Naive thymus-derived CD4-positive, alpha-beta T cell (primary cell): ENCODE measurements at regions of chr1 and their contacts with region 1.

Region 1: GRCh38 chr1:214584805-214585766 is 17.9 kb upstream of the CENPF start:
- DNase-seq: peak in 3 of 9 donors; percentile 9 to 12 (median 10)
- ATAC-seq: peak; percentile 45
- H3K4me3 ChIP-seq: no peak overlapping the region
- H3K4me3 Mint-ChIP-seq: no peak overlapping the region
- H3K27ac ChIP-seq: no peak overlapping the region
- H3K27ac Mint-ChIP-seq: no peak overlapping the region
- H3K4me1 ChIP-seq: no peaks in the 10 kb centered on the region
- H3K4me1 Mint-ChIP-seq: peaks cover 0 to 4% (median 0%) of the 10 kb centered on the region in 7 donors
- H3K27me3 ChIP-seq: no peaks in the 10 kb centered on the region
- H3K27me3 Mint-ChIP-seq: peaks cover 0 to 12% (median 4%) of the 10 kb centered on the region in 5 donors

Region 2: DNA sequence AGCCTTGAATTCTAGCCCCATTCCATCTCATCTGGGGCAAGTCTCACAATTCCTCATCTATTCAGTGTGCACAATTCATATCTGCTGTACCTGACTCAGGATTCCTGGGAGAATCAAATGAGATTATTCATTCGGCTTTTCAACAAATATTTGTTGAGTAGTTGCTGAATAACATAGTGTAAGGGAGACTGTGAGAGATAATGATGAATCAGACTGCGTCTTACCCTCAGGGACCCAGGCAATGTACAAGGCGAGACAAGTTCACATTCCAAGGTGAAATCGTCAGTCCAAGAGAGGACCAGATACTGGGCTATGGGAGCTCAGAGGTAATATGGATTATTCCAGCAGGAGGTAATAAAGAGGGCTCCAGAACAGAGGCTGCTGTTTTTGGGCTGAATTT is 371.9 kb before region 1 on chr1:
- CTCF ChIA-PET with region 1: no interaction called
- POLR2A ChIA-PET with region 1: no interaction called
- intact Hi-C with region 1: loop called in 1 of 2 experiments (anchors 5 kb)
- DNase-seq: no peak
- ATAC-seq: no peak
- H3K4me3 ChIP-seq: no peak overlapping the region
- H3K4me3 Mint-ChIP-seq: no peak overlapping the region
- H3K27ac ChIP-seq: no peak overlapping the region
- H3K27ac Mint-ChIP-seq: no peak overlapping the region
- H3K4me1 ChIP-seq: no peaks in the 10 kb centered on the region
- H3K4me1 Mint-ChIP-seq: peaks cover 0 to 10% (median 5%) of the 10 kb centered on the region in 7 donors
- H3K27me3 ChIP-seq: no peaks in the 10 kb centered on the region
- H3K27me3 Mint-ChIP-seq: peaks cover 7 to 38% (median 13%) of the 10 kb centered on the region in 5 donors

Region 3: DNA sequence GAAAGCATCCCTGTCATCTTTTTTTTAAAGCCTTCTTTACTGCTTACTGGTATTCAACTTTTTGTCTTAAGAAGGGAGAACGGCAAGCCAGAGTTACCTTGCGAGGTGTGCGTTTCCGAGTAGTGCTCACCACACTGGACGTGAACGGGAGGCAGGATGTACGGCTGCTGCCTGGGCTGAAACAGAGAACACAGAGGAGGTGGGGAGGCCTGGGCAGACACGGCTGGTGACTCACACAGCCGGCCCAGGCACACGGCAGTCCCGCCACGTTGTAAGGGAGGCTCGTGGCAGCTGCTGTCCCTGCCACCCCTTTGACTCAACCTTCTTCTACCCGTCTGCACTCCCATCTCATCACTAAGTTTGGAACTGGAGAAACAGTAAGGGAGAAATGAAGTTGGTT is 198.3 kb before region 1 on chr1:
- CTCF ChIA-PET with region 1: interaction called, 5 read pairs
- POLR2A ChIA-PET with region 1: no interaction called
- intact Hi-C with region 1: loop called in 1 of 2 experiments (anchors 1 kb)
- DNase-seq: peak in 1 of 9 donors; percentile 34
- ATAC-seq: no peak
- H3K4me3 ChIP-seq: no peak overlapping the region
- H3K4me3 Mint-ChIP-seq: peak overlapping the region in 1 of 10 donors; percentile 80
- H3K27ac ChIP-seq: no peak overlapping the region
- H3K27ac Mint-ChIP-seq: peak overlapping the region in 2 of 9 donors; percentile 47 to 94
- H3K4me1 ChIP-seq: no peaks in the 10 kb centered on the region
- H3K4me1 Mint-ChIP-seq: peaks cover 0 to 26% (median 0%) of the 10 kb centered on the region in 7 donors
- H3K27me3 ChIP-seq: no peaks in the 10 kb centered on the region
- H3K27me3 Mint-ChIP-seq: no peaks in the 10 kb centered on the region